ENCODE measurements at regions of chr1 and their contacts with region 1.

Region 1: GRCh38 chr1:34786521-34787325 is 5.7 kb downstream of the GJB3 start:
- DNase-seq: peak; percentile 33 to 43
- H3K4me3 ChIP-seq: no peak overlapping the region
- H3K27ac ChIP-seq: peak overlapping the region in 1 of 2 donors; percentile 5
- H3K4me1 ChIP-seq: peaks cover 0 to 2% of the 10 kb centered on the region in 2 donors
- H3K27me3 ChIP-seq: peaks cover under 1 to 14% of the 10 kb centered on the region in 2 donors
- CTCF ChIP-seq: peak; percentile 47 to 73 (median 58)
- POLR2A ChIP-seq: no peak

Region 2: DNA sequence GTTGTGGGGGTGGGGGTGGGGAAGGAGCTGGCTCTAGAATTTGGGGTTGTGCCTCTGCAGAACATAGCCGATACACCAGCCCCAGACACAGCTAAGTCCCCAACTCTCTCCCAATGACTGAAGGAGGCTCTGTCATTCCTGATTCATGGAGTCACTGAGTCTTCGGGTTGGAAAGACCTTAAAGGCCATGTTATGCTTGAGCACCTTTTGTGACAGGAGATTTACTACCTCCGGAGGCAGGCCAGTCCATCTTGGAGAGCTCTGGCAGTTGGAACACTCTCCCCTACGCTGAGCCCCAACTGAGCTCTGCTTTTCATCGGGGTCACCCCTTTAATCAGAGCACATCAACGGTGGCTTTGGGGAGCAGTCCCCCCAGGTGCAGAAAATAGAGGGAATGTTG is 316.3 kb before region 1 on chr1:
- intact Hi-C with region 1: no loop called
- DNase-seq: no peak
- H3K4me3 ChIP-seq: no peak overlapping the region
- H3K27ac ChIP-seq: no peak overlapping the region
- H3K4me1 ChIP-seq: no peaks in the 10 kb centered on the region
- H3K27me3 ChIP-seq: no peaks in the 10 kb centered on the region
- CTCF ChIP-seq: no peak
- POLR2A ChIP-seq: no peak

Region 3: DNA sequence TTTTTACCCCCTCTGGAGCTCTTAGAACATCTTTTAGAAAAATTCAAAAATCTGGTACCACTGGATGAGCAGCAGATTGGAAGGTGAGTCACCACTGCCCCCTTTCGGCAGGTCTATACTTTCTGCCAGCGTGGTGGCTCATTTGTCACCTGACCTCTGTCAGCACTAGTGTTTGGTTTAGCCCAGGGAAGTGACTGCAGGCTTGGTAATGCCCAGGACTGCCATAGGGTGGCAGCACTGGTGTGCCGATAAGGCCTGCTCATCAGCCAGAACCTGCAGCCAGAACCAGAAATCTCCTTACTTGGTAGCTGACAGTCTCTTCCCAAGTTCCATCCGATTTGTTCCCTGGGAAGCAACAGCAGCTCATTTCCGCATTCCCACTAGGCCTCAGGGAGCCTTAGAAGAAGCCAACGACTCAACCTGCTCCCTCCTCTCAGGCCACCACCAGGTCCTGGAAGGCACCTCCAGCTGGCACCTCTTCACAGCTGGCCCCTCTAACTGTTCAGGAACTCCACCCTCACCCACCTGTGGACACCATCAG is 66.0 kb after region 1 on chr1:
- intact Hi-C with region 1: loop called (anchors 5 kb)
- DNase-seq: peak; percentile 80 to 83
- H3K4me3 ChIP-seq: no peak overlapping the region
- H3K27ac ChIP-seq: peak overlapping the region; percentile 48 to 73
- H3K4me1 ChIP-seq: peaks cover under 1 to 3% of the 10 kb centered on the region in 2 donors
- H3K27me3 ChIP-seq: no peaks in the 10 kb centered on the region
- CTCF ChIP-seq: peak; percentile 67 to 92 (median 84)
- POLR2A ChIP-seq: no peak